Naive thymus-derived CD4-positive, alpha-beta T cell (primary cell): ENCODE measurements at regions of chr6 and their contacts with region 1.

Region 1: GRCh38 chr6:31366693-31367470 is 9.9 kb upstream of the HLA-B start:
- DNase-seq: peak; percentile 78 to 94 (median 86)
- ATAC-seq: peak; percentile 99
- H3K4me3 ChIP-seq: peak overlapping the region; percentile 58
- H3K4me3 Mint-ChIP-seq: peak overlapping the region; percentile 80 to 92 (median 84)
- H3K27ac ChIP-seq: peak overlapping the region; percentile 41
- H3K27ac Mint-ChIP-seq: peak overlapping the region; percentile 40 to 92 (median 79)
- H3K4me1 ChIP-seq: peaks cover 0 to 4% of the 10 kb centered on the region in 2 donors
- H3K4me1 Mint-ChIP-seq: peaks cover 3 to 32% (median 17%) of the 10 kb centered on the region in 7 donors
- H3K27me3 ChIP-seq: no peaks in the 10 kb centered on the region
- H3K27me3 Mint-ChIP-seq: peaks cover 0 to 77% (median 19%) of the 10 kb centered on the region in 5 donors

Region 2: GRCh38 chr6:31203345-31203979 is 163.4 kb before region 1 on chr6:
- CTCF ChIA-PET with region 1: interaction called, 13 read pairs
- POLR2A ChIA-PET with region 1: interaction called, 131 read pairs
- intact Hi-C with region 1: no loop called
- DNase-seq: peak in 3 of 9 donors; percentile 13 to 73 (median 55)
- ATAC-seq: peak; percentile 81
- H3K4me3 ChIP-seq: peak overlapping the region; percentile 67
- H3K4me3 Mint-ChIP-seq: peak overlapping the region; percentile 74 to 96 (median 89)
- H3K27ac ChIP-seq: peak overlapping the region; percentile 73
- H3K27ac Mint-ChIP-seq: peak overlapping the region; percentile 82 to 97 (median 96)
- H3K4me1 ChIP-seq: peaks cover 29 to 41% of the 10 kb centered on the region in 2 donors
- H3K4me1 Mint-ChIP-seq: peaks cover 49 to 73% (median 64%) of the 10 kb centered on the region in 7 donors
- H3K27me3 ChIP-seq: no peaks in the 10 kb centered on the region
- H3K27me3 Mint-ChIP-seq: no peaks in the 10 kb centered on the region

Region 3: GRCh38 chr6:31252625-31253024 is 114.3 kb before region 1 on chr6:
- CTCF ChIA-PET with region 1: interaction called, 11 read pairs
- POLR2A ChIA-PET with region 1: no interaction called
- intact Hi-C with region 1: no loop called
- DNase-seq: no peak
- ATAC-seq: no peak
- H3K4me3 ChIP-seq: no peak overlapping the region
- H3K4me3 Mint-ChIP-seq: no peak overlapping the region
- H3K27ac ChIP-seq: no peak overlapping the region
- H3K27ac Mint-ChIP-seq: peak overlapping the region in 1 of 9 donors; percentile 43
- H3K4me1 ChIP-seq: no peaks in the 10 kb centered on the region
- H3K4me1 Mint-ChIP-seq: peaks cover 0 to 8% (median 6%) of the 10 kb centered on the region in 7 donors
- H3K27me3 ChIP-seq: no peaks in the 10 kb centered on the region
- H3K27me3 Mint-ChIP-seq: peaks cover 0 to 55% (median 14%) of the 10 kb centered on the region in 5 donors

Region 4: GRCh38 chr6:31351401-31352309 is 15.2 kb before region 1 on chr6:
- CTCF ChIA-PET with region 1: interaction called, 10 read pairs
- POLR2A ChIA-PET with region 1: interaction called, 31 read pairs
- intact Hi-C with region 1: loop called in 1 of 2 experiments (anchors 2 kb)
- DNase-seq: peak in 8 of 9 donors; percentile 10 to 66 (median 50)
- ATAC-seq: peak; percentile 53
- H3K4me3 ChIP-seq: peak overlapping the region; percentile 19
- H3K4me3 Mint-ChIP-seq: peak overlapping the region; percentile 80 to 100 (median 98)
- H3K27ac ChIP-seq: no peak overlapping the region
- H3K27ac Mint-ChIP-seq: peak overlapping the region; percentile 56 to 100 (median 84)
- H3K4me1 ChIP-seq: peaks cover 32% of the 10 kb centered on the region in 2 donors
- H3K4me1 Mint-ChIP-seq: peaks cover 37 to 69% (median 60%) of the 10 kb centered on the region in 7 donors
- H3K27me3 ChIP-seq: no peaks in the 10 kb centered on the region
- H3K27me3 Mint-ChIP-seq: peaks cover 0 to 12% (median 0%) of the 10 kb centered on the region in 5 donors

Region 5: GRCh38 chr6:31399589-31400466 is 32.9 kb after region 1 on chr6:
- CTCF ChIA-PET with region 1: no interaction called
- POLR2A ChIA-PET with region 1: no interaction called
- intact Hi-C with region 1: no loop called
- DNase-seq: peak; percentile 34 to 81 (median 51)
- ATAC-seq: peak; percentile 47
- H3K4me3 ChIP-seq: peak overlapping the region; percentile 84
- H3K4me3 Mint-ChIP-seq: peak overlapping the region; percentile 83 to 98 (median 90)
- H3K27ac ChIP-seq: peak overlapping the region; percentile 76
- H3K27ac Mint-ChIP-seq: peak overlapping the region; percentile 76 to 94 (median 90)
- H3K4me1 ChIP-seq: peaks cover 17 to 27% of the 10 kb centered on the region in 2 donors
- H3K4me1 Mint-ChIP-seq: peaks cover 40 to 72% (median 53%) of the 10 kb centered on the region in 7 donors
- H3K27me3 ChIP-seq: no peaks in the 10 kb centered on the region
- H3K27me3 Mint-ChIP-seq: peaks cover 0 to 4% (median 0%) of the 10 kb centered on the region in 5 donors